MCF 10A (cell line): ENCODE measurements at regions of chr18 and their contacts with region 1.

Region 1: GRCh38 chr18:12862467-12862866 is 21.6 kb downstream of the PTPN2 start:
- DNase-seq: peak; percentile 46
- H3K4me3 Mint-ChIP-seq: peak overlapping the region; percentile 61
- H3K27ac Mint-ChIP-seq: peak overlapping the region; percentile 79
- H3K4me1 Mint-ChIP-seq: peaks cover 31% of the 10 kb centered on the region
- H3K27me3 Mint-ChIP-seq: no peaks in the 10 kb centered on the region
- CTCF ChIP-seq: no peak

Region 2: DNA sequence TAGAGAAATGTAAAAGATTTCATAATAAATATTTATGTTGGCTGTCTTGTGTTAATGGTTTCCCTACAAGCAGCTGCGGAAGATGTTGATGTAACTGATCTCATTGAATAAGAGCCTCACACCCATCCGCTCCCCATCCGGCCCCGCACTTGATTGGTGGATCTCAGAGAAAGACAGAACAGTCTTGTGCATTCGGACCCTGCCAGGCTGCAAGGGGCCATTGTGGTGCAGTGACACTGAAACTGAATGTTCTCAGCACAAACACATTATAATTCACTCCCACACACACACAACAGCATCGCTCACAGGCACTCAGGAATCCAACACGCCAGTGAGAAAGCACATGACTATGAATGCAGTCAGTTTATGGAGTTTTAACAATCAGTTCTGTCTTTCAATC is 407.0 kb before region 1 on chr18:
- CTCF ChIA-PET with region 1: no interaction called
- POLR2A ChIA-PET with region 1: no interaction called
- intact Hi-C with region 1: no loop called
- DNase-seq: no peak
- H3K4me3 Mint-ChIP-seq: no peak overlapping the region
- H3K27ac Mint-ChIP-seq: no peak overlapping the region
- H3K4me1 Mint-ChIP-seq: no peaks in the 10 kb centered on the region
- H3K27me3 Mint-ChIP-seq: no peaks in the 10 kb centered on the region
- CTCF ChIP-seq: no peak

Region 3: DNA sequence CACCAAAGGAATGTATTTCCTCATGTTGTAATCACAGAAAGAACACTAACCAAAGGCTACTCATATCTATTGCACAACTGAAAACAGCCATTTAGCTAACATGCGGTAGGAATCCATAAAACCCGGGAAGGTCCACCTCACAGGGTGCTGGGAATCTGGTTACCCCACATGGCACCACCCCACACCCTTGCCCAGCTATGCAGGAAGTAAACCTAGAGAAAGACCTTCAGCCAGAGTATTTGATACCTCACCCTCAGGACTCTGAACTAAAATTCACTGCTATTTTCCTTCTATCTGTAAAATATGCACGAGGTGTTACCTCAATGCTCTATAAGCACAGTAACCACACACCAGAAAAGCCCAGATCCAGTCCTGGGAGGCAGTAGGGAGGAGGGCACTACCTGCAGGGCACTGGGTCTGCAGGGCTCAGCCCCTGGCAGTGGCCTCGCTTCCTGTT is 24.3 kb before region 1 on chr18:
- CTCF ChIA-PET with region 1: interaction called, 6 read pairs
- POLR2A ChIA-PET with region 1: interaction called, 13 read pairs
- intact Hi-C with region 1: no loop called
- DNase-seq: peak; percentile 97
- H3K4me3 Mint-ChIP-seq: peak overlapping the region; percentile 64
- H3K27ac Mint-ChIP-seq: peak overlapping the region; percentile 87
- H3K4me1 Mint-ChIP-seq: peaks cover 36% of the 10 kb centered on the region
- H3K27me3 Mint-ChIP-seq: no peaks in the 10 kb centered on the region
- CTCF ChIP-seq: no peak